Activated CD8-positive, alpha-beta memory T cell treated with anti-CD3 and anti-CD28 coated beads, Interleukin-2, amount 10 ng/mL, durations not matched to agents 7 days and 5 days (primary cell): ENCODE measurements at regions of chr15 and their contacts with region 1.

Region 1: DNA sequence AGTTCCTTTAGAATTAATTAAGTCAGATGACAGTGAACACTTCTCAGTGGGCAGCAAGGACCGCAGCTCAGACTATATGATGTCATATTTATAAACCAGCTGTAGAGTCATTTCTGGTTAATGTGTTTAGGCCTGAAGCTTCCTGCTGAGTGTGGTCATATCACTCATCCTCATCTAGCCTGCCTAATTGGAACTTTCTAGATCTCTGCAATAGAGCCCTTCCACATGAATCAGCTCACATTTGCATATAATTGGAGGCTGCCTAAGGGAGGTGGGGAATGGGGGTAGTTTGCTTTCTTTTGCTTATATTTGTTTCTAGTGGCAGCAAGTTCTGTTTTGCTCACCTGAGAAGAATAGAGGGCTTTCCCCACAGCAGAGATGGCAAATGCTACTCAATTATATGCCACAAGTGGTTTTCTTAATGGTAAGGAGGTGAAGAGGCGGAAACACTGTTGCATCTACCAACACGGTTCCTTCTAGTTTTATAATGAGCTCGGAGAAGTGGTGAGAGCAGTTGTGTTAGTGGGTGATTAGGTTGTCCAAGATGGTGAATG is 148.1 kb downstream of the KLHL25 start:
- DNase-seq: peak; percentile 81
- ATAC-seq: peak; percentile 81
- H3K4me3 Mint-ChIP-seq: peak overlapping the region; percentile 53
- H3K27ac Mint-ChIP-seq: peak overlapping the region; percentile 90
- H3K4me1 Mint-ChIP-seq: peaks cover 59% of the 10 kb centered on the region
- H3K27me3 Mint-ChIP-seq: no peaks in the 10 kb centered on the region

Region 2: DNA sequence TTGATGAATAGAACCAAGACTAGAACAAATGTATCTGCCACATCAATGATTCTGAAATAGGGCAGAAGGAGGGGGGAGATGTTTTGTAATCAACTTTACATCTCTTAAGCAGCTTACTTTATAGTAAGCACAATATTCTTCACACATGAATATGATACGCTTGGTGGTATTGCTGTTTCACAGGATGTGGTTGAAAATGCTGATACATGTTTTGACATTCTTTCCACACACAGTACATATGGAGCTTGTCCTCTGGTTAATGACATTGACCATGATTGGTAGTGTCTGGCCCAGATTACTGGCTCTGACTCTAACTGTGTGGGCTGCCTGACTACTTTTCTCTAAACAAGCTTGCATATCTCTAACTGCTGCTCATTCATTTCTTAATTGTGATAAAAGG is 20.8 kb before region 1 on chr15:
- CTCF ChIA-PET with region 1: interaction called, 27 read pairs
- DNase-seq: peak; percentile 74
- ATAC-seq: peak; percentile 86
- H3K4me3 Mint-ChIP-seq: peak overlapping the region; percentile 56
- H3K27ac Mint-ChIP-seq: peak overlapping the region; percentile 96
- H3K4me1 Mint-ChIP-seq: peaks cover 75% of the 10 kb centered on the region
- H3K27me3 Mint-ChIP-seq: no peaks in the 10 kb centered on the region